ENCODE measurements at regions of chr15 and their contacts with region 1.

Region 1: GRCh38 chr15:66285533-66286280 is 7.7 kb upstream of the DIS3L start:
- H3K4me3 ChIP-seq: no peak overlapping the region
- H3K27ac ChIP-seq: peak overlapping the region; percentile 10; the same call in 1 of the 2 replicates
- H3K4me1 ChIP-seq: peaks cover 11% of the 10 kb centered on the region
- CTCF ChIP-seq: no peak

Region 2: DNA sequence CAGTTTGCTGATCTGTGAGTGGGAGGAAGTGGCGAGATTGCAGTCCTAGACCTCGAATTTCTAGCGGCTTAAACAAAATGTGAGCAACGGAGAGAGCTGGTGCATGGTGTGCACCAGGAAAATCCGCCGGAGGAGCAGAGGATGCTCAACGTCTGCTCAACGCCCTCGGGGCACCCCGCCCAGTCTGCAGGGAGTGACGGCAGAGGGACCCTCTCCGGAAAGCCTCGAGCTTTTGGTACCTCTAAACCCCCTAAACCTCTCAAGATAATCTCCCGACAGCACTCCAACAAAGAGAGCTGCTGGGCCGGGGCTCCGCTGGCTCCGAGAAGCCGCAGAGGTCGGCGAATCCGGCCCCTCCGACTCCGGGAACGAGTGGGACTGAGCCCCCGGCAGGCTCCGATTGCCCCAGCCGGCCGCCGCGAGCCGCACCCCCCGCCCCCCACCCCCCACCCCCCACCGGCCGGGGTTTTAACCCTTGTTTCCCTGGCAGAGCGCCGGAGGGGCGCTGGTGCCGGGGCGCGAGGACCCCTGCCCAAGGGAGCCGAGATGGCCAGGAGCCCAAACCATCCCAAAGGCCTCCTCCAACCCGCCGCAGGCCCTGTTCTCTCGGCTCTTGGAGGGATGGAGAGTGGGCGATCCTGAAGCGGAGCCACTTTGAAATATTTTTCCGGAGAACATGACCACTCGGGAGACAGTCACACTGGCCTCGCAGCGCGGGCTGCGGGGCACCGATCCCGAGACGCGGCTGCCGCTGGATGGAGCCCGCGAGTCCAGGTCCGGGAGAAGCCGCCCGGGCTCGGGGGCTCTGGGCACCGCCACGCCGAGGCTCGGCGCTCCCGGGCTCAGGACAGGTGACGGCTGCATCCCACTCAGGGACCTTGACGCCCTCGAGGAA is 33.7 kb before region 1 on chr15:
- CTCF ChIA-PET with region 1: interaction called, 11 read pairs
- POLR2A ChIA-PET with region 1: no interaction called
- H3K4me3 ChIP-seq: peak overlapping the region; percentile 38
- H3K27ac ChIP-seq: no peak overlapping the region
- H3K4me1 ChIP-seq: peaks cover 17% of the 10 kb centered on the region
- CTCF ChIP-seq: peak; percentile 90

Measured in HEK293 (cell line).